ENCODE measurements at regions of chr12 and their contacts with region 1.

Region 1: GRCh38 chr12:98490501-98491453 is 24.6 kb upstream of the TMPO start:
- DNase-seq: peak; percentile 84
- H3K4me3 Mint-ChIP-seq: peak overlapping the region; percentile 12
- H3K27ac Mint-ChIP-seq: peak overlapping the region; percentile 78
- H3K4me1 Mint-ChIP-seq: peaks cover 6% of the 10 kb centered on the region
- H3K27me3 Mint-ChIP-seq: peaks cover 9% of the 10 kb centered on the region

Region 2: GRCh38 chr12:98503592-98504367 is 13.0 kb after region 1 on chr12:
- CTCF ChIA-PET with region 1: interaction called, 32 read pairs
- POLR2A ChIA-PET with region 1: interaction called, 10 read pairs
- DNase-seq: peak; percentile 96
- H3K4me3 Mint-ChIP-seq: peak overlapping the region; percentile 86
- H3K27ac Mint-ChIP-seq: peak overlapping the region; percentile 98
- H3K4me1 Mint-ChIP-seq: peaks cover 35% of the 10 kb centered on the region
- H3K27me3 Mint-ChIP-seq: peaks cover 3% of the 10 kb centered on the region

Region 3: DNA sequence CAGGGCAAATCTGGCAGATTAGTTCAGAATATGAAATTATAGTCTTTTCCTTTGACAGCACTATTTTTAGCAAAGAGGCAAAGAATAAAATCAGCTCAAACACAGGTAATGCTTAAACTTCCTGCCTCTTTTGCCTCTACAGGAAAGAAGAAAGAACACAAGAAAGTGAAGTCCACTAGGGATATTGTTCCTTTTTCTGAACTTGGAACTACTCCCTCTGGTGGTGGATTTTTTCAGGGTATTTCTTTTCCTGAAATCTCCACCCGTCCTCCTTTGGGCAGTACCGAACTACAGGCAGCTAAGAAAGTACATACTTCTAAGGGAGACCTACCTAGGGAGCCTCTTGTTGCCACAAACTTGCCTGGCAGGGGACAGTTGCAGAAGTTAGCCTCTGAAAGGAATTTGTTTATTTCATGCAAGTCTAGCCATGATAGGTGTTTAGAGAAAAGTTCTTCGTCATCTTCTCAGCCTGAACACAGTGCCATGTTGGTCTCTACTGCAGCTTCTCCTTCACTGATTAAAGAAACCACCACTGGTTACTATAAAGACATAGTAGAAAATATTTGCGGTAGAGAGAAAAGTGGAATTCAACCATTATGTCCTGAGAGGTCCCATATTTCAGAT is 42.0 kb after region 1 on chr12:
- CTCF ChIA-PET with region 1: interaction called, 34 read pairs
- POLR2A ChIA-PET with region 1: no interaction called
- DNase-seq: no peak
- H3K4me3 Mint-ChIP-seq: no peak overlapping the region
- H3K27ac Mint-ChIP-seq: peak overlapping the region; percentile 31
- H3K4me1 Mint-ChIP-seq: peaks cover 40% of the 10 kb centered on the region
- H3K27me3 Mint-ChIP-seq: no peaks in the 10 kb centered on the region

Region 4: GRCh38 chr12:98998697-98999299 is 508.0 kb after region 1 on chr12:
- CTCF ChIA-PET with region 1: interaction called, 14 read pairs
- POLR2A ChIA-PET with region 1: no interaction called
- DNase-seq: no peak
- H3K4me3 Mint-ChIP-seq: no peak overlapping the region
- H3K27ac Mint-ChIP-seq: no peak overlapping the region
- H3K4me1 Mint-ChIP-seq: no peaks in the 10 kb centered on the region
- H3K27me3 Mint-ChIP-seq: peaks cover 14% of the 10 kb centered on the region